Posterior vena cava (tissue), 2 donors: ENCODE measurements at regions of chr12 and their contacts with region 1.

Region 1: DNA sequence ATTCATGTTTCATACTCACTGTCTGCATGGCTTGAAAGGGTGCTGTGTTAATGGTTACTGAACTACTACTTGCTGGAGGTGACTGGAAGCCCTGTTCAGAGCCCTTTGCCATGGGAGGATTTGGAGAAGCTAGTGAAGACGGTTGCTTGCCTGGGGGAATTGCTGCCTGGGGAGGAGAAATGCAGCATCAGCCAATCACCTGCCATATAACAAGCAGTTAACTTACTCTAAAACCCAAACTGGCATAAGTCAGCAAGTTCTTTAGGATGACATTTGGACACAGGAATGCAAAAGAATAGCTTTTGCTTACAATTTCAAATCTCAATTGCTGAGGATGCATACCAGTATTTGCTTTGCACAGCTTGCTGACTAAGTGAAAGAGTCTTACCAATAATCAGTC is 23.4 kb upstream of the IPO8 start:
- DNase-seq: no peak

Region 2: DNA sequence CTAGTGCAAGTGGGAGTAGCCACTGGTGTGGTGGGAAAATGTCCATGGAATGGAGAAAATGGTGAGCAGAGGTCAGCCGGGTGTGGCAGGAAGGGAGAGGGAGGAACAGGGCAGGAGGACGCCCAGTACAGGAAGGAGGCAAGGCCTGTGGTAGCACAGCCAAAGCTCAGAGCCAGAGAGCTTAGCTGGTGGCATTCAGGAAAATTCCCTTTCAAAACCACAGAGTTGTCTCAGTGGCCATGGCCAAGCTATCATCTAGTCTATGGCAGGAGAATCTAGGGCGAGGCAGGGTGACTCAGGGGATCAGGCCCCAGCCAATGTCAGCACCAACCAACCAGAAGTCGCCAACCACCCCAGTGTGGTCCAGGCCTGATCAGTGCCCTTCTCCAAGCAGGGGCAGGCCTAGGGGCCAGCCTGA is 286.9 kb after region 1 on chr12:
- intact Hi-C with region 1: loop called in 1 of 2 experiments (anchors 5 kb)
- DNase-seq: peak; percentile 75

Region 3: GRCh38 chr12:31029916-31030562 is 311.0 kb after region 1 on chr12:
- intact Hi-C with region 1: no loop called
- DNase-seq: no peak